ENCODE measurements at regions of chr16 and their contacts with region 1.

Region 1: GRCh38 chr16:2808181-2808580 is 8.9 kb upstream of the PRSS21 start:
- DNase-seq: no peak
- H3K4me3 ChIP-seq: no peak overlapping the region
- H3K27ac ChIP-seq: no peak overlapping the region
- H3K4me1 ChIP-seq: no peaks in the 10 kb centered on the region
- H3K27me3 ChIP-seq: no peaks in the 10 kb centered on the region
- CTCF ChIP-seq: no peak

Region 2: DNA sequence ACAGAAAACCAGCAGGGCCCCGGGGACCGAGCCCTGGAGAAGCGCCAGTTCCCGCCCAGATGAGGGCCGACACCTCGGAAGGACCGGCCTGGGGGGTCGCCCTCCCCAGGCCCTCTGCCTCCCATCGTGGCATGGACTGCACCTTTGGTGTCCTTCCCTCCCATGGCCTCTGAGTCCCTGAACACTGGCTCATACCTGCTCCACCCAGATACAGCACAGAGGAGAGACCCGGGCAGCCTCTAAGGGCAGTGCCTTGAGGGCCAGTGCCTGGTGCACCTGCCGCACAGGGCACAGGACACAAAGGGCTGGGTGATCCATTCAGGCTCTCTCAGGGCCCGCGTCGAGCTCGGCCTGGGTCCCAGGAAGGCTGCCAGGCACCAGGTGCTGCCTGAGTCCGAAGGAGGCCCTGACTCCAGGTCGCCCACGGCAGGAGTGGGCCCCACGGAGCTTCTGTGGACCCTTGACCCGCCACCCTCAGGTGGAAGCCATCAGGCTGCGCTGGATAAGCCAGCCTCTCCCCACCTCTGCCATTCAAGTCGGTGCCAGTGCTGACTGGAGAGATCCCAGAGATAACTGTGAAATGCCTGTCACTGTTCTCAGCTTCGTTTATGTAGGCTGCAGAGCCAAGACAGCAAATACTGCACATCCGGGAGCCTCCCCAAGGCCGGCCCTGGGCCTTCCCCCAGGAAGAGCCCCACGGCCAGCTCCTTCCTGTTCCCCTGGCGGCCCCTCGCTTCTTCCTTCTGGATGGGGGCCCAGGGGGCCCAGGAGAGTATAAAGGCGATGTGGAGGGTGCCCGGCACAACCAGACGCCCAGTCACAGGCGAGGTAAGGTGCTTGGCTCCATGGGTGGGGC is 21.5 kb after region 1 on chr16 and contains the start of gene ZG16B:
- intact Hi-C with region 1: loop called (anchors 2 kb)
- DNase-seq: peak; percentile 71
- H3K4me3 ChIP-seq: peak within 1 kb of the TSS; percentile 4
- H3K27ac ChIP-seq: peak within 1 kb of the TSS; percentile 87
- H3K4me1 ChIP-seq: no peaks in the 10 kb centered on the region
- H3K27me3 ChIP-seq: no peaks in the 10 kb centered on the region
- CTCF ChIP-seq: no peak
- total RNA-seq, gene ZG16B: 34.1 to 62.1 TPM

Region 3: GRCh38 chr16:2911580-2912329 is 103.6 kb after region 1 on chr16 and contains the start of gene FLYWCH1:
- intact Hi-C with region 1: no loop called
- DNase-seq: peak; percentile 99
- H3K4me3 ChIP-seq: peak within 1 kb of the TSS; percentile 87
- H3K27ac ChIP-seq: peak within 1 kb of the TSS; percentile 71
- H3K4me1 ChIP-seq: no peaks in the 10 kb centered on the region
- H3K27me3 ChIP-seq: no peaks in the 10 kb centered on the region
- CTCF ChIP-seq: no peak
- total RNA-seq, gene FLYWCH1: 18.5 to 28.4 TPM